ENCODE measurements at regions of chr4 and their contacts with region 1.

Region 1: GRCh38 chr4:85448869-85449626 is 25.9 kb upstream of the ARHGAP24 start:
- DNase-seq: no peak

Region 2: GRCh38 chr4:85084380-85085094 is 364.5 kb before region 1 on chr4:
- intact Hi-C with region 1: loop called (anchors 10 kb)
- DNase-seq: no peak

Region 3: GRCh38 chr4:85909851-85910250 is 460.8 kb after region 1 on chr4:
- intact Hi-C with region 1: no loop called
- DNase-seq: no peak